Posterior cingulate gyrus (tissue), 11 donors: ENCODE measurements at regions of chr1 and their contacts with region 1.

Region 1: DNA sequence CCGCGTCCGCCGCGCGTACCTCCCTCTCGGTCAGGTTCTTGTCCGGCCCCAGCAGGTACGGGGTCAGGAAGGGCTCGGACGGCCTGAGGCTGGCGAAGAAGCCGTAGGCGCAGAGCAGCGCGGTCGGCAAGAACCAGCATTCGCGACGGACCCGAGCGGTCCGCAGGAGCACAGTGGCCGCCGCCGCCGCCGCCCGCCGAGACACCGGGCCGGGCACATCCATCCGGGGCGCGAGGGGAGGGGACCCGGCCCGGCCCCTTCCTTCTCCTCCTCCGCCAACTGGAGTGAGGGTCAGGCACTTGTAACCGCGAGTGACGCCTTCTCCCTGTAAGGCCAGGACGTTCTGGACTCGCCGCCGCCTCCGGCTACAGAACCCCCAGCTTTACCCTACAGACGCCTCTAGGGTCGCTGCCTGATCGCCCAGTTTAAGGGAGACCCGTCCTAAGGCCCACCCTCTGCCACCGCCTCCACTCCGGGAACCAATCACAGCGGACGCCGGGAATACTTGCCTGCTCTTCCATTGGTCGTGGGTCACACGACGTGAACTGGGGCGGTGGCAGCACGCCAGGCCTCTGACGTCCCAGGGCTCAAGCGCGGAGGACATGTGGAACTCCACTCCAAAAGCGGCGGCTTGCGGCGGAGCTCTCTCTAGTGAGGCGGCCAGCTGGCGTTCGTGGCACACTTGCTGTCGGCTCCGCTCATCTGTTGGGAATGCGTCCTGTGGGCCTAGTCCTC is at the start of gene SLC19A2:
- DNase-seq: peak; percentile 98 to 100 (median 100)

Region 2: GRCh38 chr1:169367486-169368405 is 118.0 kb before region 1 on chr1 and contains the starts of genes BLZF1 and NME7:
- intact Hi-C with region 1: loop called (anchors 5 kb)
- DNase-seq: peak; percentile 90 to 99 (median 96)

Region 3: GRCh38 chr1:169427081-169427641 is 58.5 kb before region 1 on chr1 and contains the start of gene CCDC181:
- intact Hi-C with region 1: loop called (anchors 10 kb)
- DNase-seq: peak; percentile 73 to 97 (median 86)